ENCODE measurements at regions of chr4 and their contacts with region 1.

Region 1: GRCh38 chr4:25770847-25771246 is 91.9 kb downstream of the SEL1L3 start:
- DNase-seq: no peak
- ATAC-seq: peak; percentile 74
- H3K4me3 ChIP-seq: no peak overlapping the region
- H3K27ac ChIP-seq: no peak overlapping the region
- H3K4me1 ChIP-seq: no peaks in the 10 kb centered on the region
- H3K27me3 ChIP-seq: no peaks in the 10 kb centered on the region
- CTCF ChIP-seq: no peak

Region 2: DNA sequence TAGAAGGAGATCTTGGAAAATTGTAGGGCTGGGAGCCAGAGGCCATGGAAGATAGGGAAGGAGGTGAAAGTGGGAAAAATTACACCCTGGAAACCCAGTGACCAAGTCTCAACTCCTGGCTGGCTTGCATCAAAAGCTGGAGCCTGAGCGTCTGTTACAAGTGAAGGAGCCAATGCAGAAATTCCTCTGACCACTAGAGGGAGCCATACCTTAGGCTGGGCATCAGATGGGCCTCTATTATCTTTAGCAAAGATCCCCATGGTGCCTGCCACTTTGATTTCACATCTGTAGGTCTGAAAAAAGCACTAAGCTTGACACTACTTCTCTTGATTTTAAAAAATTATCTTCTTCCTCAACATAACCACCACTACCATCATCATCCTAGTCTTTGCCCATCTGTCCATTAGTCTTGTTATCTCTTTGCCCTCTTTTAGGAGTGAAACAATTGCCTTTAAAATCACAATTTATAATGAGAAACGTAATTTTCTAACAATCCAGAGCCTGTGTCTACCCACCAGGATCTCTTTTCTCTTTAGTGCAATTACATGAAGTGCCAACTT is 330.8 kb before region 1 on chr4:
- intact Hi-C with region 1: loop called in 1 of 2 experiments (anchors 5 kb)
- DNase-seq: peak in 3 of 4 donors; percentile 43 to 76 (median 50)
- ATAC-seq: peak; percentile 68
- H3K4me3 ChIP-seq: no peak overlapping the region
- H3K27ac ChIP-seq: peak overlapping the region; percentile 23 to 62
- H3K4me1 ChIP-seq: peaks cover 10% of the 10 kb centered on the region in 2 donors
- H3K27me3 ChIP-seq: no peaks in the 10 kb centered on the region
- CTCF ChIP-seq: peak; percentile 81 to 88

Measured in left lung (tissue), 14 donors.